Dorsolateral prefrontal cortex (tissue), 120 donors: ENCODE measurements at regions of chr6 and their contacts with region 1.

Region 1: DNA sequence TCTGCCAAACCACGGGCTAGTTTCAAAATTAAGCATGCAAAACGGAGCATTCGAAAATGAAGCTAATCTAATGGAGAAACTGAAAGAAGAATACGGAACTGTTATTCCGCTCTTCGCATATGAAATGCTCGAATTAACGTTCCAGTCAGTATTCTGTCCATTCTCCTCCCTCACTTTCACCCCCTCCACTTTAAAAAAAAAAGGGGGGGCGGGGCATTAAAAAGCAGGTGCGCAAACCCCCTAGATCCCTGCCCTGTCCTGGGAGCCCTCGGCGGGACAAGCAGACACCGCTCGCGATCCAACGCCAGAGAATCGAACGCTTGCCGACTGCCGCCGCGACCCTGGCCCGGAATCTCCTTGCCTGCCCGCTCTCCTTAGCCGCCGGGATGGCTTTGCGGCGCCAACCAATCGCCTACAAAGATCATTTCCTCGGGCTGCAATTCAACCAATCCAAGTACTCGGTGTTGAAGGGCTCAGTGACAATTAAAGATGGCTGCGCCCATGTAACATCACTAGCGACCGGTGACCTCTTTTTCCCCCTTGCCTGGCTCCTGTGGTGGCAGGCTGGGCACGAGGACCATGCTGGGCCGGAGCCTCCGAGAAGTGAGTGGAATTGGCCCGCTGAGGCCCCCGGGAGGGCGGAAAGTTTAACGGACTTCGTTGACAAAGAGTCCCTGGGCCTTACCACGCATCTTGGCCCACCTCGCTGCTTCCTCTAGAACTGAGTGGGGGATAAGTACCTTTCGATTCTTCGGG is at the starts of genes QRSL1 and RTN4IP1:
- DNase-seq: peak; percentile 66 to 90 (median 85)
- H3K4me3 ChIP-seq: peak within 1 kb of the TSS; percentile 61 to 99 (median 87)
- H3K27ac ChIP-seq: peak within 1 kb of the TSS in 56 of 59 donors; percentile 29 to 92 (median 81)
- H3K27me3 ChIP-seq: no peaks in the 10 kb centered on the region
- CTCF ChIP-seq: peak in 19 of 56 donors; percentile 4 to 41 (median 18)
- total RNA-seq, gene QRSL1: 8.7 to 23.5 (median 12.6) TPM
- total RNA-seq, gene RTN4IP1: 4.8 to 17.5 (median 11.7) TPM

Region 2: DNA sequence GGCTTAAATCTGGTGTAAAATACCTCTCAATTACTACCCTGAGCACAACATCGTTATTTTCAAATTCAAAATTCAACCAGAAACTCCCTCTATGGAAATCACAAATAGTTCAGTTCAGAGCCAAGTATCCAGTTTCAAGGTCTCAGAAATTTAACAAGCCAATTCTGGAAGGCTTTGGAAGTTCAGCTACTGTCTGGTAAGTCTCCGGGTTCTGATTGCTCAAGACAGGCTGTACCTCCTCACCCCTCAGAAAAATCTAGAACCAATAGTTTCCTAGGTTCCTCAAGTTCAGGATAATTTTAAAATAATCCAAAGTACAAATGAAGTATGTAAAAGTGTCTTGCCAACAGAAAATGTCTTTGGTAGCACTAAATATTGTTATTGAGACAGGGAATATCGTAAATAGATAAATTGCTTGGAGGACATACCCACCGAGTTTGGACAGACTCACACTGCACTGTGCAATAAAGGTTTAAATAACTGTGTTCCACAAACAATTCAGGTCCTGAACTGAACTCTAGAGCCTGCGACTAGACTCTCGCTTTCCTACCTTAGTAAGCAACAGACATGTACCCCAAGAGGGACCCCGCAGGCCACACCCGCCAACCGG is 304.4 kb before region 1 on chr6:
- intact Hi-C with region 1: loop called in 1 of 2 experiments (anchors 5 kb)
- DNase-seq: no peak
- H3K4me3 ChIP-seq: peak overlapping the region; percentile 65 to 100 (median 91)
- H3K27ac ChIP-seq: peak overlapping the region in 55 of 59 donors; percentile 13 to 95 (median 84)
- H3K27me3 ChIP-seq: no peaks in the 10 kb centered on the region
- CTCF ChIP-seq: no peak